CD4-positive, alpha-beta T cell (primary cell): ENCODE measurements at regions of chr10 and their contacts with region 1.

Region 1: GRCh38 chr10:43671656-43672531 is 23.2 kb upstream of the ZNF32 start:
- DNase-seq: peak in 10 of 14 experiments; percentile 16 to 81 (median 34)
- ATAC-seq: peak; percentile 68
- H3K4me3 ChIP-seq: no peak overlapping the region
- H3K4me3 Mint-ChIP-seq: no peak overlapping the region
- H3K27ac ChIP-seq: no peak overlapping the region
- H3K27ac Mint-ChIP-seq: no peak overlapping the region
- H3K4me1 ChIP-seq: peaks cover 10% of the 10 kb centered on the region
- H3K4me1 Mint-ChIP-seq: no peaks in the 10 kb centered on the region
- H3K27me3 ChIP-seq: peaks cover 21 to 42% of the 10 kb centered on the region in 2 experiments
- H3K27me3 Mint-ChIP-seq: peaks cover 55% of the 10 kb centered on the region
- CTCF ChIP-seq: peak; percentile 80

Region 2: DNA sequence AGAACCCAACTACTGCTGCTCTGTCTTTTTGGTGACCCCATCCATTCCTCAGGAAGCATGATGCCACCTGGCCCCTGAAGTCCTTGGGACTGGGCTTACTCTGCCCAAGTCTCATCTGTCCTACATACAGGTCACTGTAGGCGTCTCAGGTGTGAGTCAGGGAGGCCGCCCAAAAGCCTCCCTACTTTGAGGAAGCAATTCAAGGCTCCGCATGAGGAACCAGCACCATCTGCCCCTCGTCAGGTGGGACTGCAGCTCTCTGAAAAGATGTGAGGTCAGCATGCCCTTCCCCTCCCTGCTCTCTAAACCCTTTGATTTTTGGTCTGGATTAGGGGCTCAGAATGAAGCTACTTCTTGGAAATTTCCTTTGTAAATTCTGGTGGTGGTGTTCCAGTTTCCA is 358.2 kb after region 1 on chr10:
- CTCF ChIA-PET with region 1: no interaction called
- POLR2A ChIA-PET with region 1: no interaction called
- intact Hi-C with region 1: loop called (anchors 1 to 2 kb)
- DNase-seq: peak in 10 of 14 experiments; percentile 3 to 57 (median 12)
- ATAC-seq: peak; percentile 54
- H3K4me3 ChIP-seq: no peak overlapping the region
- H3K4me3 Mint-ChIP-seq: no peak overlapping the region
- H3K27ac ChIP-seq: no peak overlapping the region
- H3K27ac Mint-ChIP-seq: no peak overlapping the region
- H3K4me1 ChIP-seq: no peaks in the 10 kb centered on the region
- H3K4me1 Mint-ChIP-seq: no peaks in the 10 kb centered on the region
- H3K27me3 ChIP-seq: no peaks in the 10 kb centered on the region
- H3K27me3 Mint-ChIP-seq: peaks cover 29% of the 10 kb centered on the region
- CTCF ChIP-seq: no peak

Region 3: DNA sequence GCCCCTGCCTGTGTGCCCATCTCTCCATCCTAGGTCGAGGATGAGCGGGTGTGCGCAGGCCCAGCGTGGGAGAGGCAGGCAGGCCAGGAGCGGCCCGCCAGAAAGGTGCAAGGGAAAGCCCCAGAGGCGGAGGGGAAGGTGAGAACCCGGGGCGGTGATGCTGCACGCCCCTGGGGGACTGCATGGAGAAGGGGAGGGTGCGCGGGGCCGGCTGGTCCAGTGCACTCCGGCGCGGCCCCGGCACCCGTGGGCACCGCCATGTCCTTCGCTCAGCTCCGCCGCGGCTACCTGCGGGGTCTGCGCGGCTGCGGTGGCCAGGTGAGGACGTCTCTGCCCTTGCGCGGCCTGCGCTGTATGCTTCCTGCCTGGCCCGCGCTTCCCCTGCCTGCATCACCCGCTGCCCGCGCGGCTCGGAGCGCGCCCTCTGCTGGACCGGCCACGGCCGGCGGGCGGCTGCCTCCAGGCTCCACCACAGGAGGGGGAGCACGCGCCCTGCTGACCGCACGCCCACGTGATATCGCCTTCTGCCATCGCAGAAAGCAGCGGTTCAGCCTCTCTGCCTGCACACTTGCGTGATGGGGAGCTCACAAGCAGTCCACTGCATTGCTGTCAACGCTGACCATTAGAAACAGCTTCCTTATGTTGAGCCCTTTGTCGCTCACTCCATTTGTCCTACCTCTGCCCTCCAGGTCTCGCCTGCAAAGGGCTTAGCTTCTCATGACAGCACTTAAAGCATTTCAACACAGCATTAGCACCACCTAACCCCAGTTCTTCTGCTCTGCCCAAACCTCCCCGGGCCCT is 639.1 kb after region 1 on chr10:
- CTCF ChIA-PET with region 1: no interaction called
- POLR2A ChIA-PET with region 1: no interaction called
- intact Hi-C with region 1: loop called (anchors 1 to 2 kb)
- DNase-seq: peak; percentile 15 to 80 (median 50)
- ATAC-seq: peak; percentile 73
- H3K4me3 ChIP-seq: peak overlapping the region; percentile 22
- H3K4me3 Mint-ChIP-seq: no peak overlapping the region
- H3K27ac ChIP-seq: no peak overlapping the region
- H3K27ac Mint-ChIP-seq: no peak overlapping the region
- H3K4me1 ChIP-seq: peaks cover 14% of the 10 kb centered on the region
- H3K4me1 Mint-ChIP-seq: peaks cover 6% of the 10 kb centered on the region
- H3K27me3 ChIP-seq: no peaks in the 10 kb centered on the region
- H3K27me3 Mint-ChIP-seq: peaks cover 18% of the 10 kb centered on the region
- CTCF ChIP-seq: peak; percentile 49

Region 4: DNA sequence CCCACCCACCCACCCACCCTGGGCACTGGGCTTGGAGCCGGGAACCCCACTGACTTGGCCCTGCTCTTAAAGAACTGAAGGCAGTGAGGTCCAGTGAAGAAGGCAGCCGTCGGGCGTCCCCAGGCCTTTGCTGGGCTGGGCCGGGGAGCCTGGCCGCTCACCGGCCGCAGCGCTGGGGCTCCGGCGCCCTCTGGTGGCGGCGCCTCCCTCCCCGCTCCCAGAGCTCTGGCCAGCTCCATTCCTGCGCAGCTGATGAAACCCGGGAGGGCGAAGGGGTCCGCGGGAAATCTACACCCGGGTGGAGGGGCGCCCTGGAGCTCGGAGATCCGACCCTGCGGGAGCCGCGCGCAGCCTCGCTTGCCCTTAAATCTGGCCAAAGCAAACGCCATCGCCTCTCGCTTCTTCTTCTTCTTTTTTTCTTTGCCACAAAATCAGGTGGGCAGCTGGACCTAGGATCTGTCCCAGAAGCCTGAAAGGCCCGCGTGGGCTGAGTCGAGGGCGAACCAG is 714.7 kb after region 1 on chr10:
- CTCF ChIA-PET with region 1: interaction called, 5 read pairs
- POLR2A ChIA-PET with region 1: no interaction called
- intact Hi-C with region 1: loop called in 1 of 2 experiments (anchors 1 kb)
- DNase-seq: peak in 7 of 14 experiments; percentile 4 to 58 (median 18)
- ATAC-seq: no peak
- H3K4me3 ChIP-seq: no peak overlapping the region
- H3K4me3 Mint-ChIP-seq: no peak overlapping the region
- H3K27ac ChIP-seq: no peak overlapping the region
- H3K27ac Mint-ChIP-seq: no peak overlapping the region
- H3K4me1 ChIP-seq: peaks cover 3% of the 10 kb centered on the region
- H3K4me1 Mint-ChIP-seq: peaks cover 4% of the 10 kb centered on the region
- H3K27me3 ChIP-seq: peaks cover 27 to 53% of the 10 kb centered on the region in 2 experiments
- H3K27me3 Mint-ChIP-seq: peaks cover 54% of the 10 kb centered on the region
- CTCF ChIP-seq: peak; percentile 42

Region 5: DNA sequence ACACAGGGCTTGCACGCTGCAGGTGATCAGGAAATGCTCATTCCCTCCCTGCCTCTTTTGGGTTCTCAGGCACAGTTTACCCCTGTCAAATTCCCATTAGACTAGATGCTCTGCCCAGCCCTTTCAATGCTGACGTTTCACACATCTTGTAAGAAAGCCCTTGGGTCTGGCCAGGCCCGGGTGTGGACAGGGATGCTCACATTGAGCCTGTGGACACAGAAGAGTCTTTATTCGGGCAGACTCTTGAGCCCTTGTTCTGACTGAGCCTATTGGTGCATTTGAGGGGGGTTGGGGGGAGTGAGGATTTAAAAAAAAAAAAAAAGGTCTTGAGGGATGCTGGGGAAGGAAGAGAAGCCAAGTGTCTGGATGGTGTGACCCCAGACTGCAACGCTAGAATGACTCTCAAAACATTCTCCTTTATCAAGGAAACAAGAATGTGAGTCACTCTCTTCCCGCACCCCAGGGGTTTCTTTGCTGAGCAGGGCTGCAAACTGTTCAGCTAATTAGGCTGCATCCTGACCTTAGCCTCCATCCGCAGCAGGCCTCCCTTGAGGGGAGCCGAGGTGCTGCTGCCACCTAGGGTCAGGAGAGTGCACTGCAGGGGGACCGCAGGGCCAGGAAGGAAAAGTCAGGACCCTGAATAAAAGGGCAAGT is 1185.6 kb after region 1 on chr10:
- CTCF ChIA-PET with region 1: no interaction called
- POLR2A ChIA-PET with region 1: no interaction called
- intact Hi-C with region 1: loop called in 1 of 2 experiments (anchors 2 kb)
- DNase-seq: peak; percentile 20 to 69 (median 43)
- ATAC-seq: peak; percentile 84
- H3K4me3 ChIP-seq: no peak overlapping the region
- H3K4me3 Mint-ChIP-seq: no peak overlapping the region
- H3K27ac ChIP-seq: no peak overlapping the region
- H3K27ac Mint-ChIP-seq: no peak overlapping the region
- H3K4me1 ChIP-seq: no peaks in the 10 kb centered on the region
- H3K4me1 Mint-ChIP-seq: no peaks in the 10 kb centered on the region
- H3K27me3 ChIP-seq: peaks cover 0 to 5% of the 10 kb centered on the region in 2 experiments
- H3K27me3 Mint-ChIP-seq: peaks cover 3% of the 10 kb centered on the region
- CTCF ChIP-seq: peak; percentile 98

Region 6: GRCh38 chr10:44864637-44865288 is 1192.9 kb after region 1 on chr10:
- CTCF ChIA-PET with region 1: no interaction called
- POLR2A ChIA-PET with region 1: no interaction called
- intact Hi-C with region 1: loop called (anchors 1 to 2 kb)
- DNase-seq: peak; percentile 60 to 90 (median 80)
- ATAC-seq: peak; percentile 73
- H3K4me3 ChIP-seq: peak overlapping the region; percentile 55
- H3K4me3 Mint-ChIP-seq: peak overlapping the region; percentile 87
- H3K27ac ChIP-seq: no peak overlapping the region
- H3K27ac Mint-ChIP-seq: no peak overlapping the region
- H3K4me1 ChIP-seq: peaks cover 17% of the 10 kb centered on the region
- H3K4me1 Mint-ChIP-seq: peaks cover 21% of the 10 kb centered on the region
- H3K27me3 ChIP-seq: peaks cover 22 to 30% of the 10 kb centered on the region in 2 experiments
- H3K27me3 Mint-ChIP-seq: peaks cover 70% of the 10 kb centered on the region
- CTCF ChIP-seq: peak; percentile 90

Region 7: DNA sequence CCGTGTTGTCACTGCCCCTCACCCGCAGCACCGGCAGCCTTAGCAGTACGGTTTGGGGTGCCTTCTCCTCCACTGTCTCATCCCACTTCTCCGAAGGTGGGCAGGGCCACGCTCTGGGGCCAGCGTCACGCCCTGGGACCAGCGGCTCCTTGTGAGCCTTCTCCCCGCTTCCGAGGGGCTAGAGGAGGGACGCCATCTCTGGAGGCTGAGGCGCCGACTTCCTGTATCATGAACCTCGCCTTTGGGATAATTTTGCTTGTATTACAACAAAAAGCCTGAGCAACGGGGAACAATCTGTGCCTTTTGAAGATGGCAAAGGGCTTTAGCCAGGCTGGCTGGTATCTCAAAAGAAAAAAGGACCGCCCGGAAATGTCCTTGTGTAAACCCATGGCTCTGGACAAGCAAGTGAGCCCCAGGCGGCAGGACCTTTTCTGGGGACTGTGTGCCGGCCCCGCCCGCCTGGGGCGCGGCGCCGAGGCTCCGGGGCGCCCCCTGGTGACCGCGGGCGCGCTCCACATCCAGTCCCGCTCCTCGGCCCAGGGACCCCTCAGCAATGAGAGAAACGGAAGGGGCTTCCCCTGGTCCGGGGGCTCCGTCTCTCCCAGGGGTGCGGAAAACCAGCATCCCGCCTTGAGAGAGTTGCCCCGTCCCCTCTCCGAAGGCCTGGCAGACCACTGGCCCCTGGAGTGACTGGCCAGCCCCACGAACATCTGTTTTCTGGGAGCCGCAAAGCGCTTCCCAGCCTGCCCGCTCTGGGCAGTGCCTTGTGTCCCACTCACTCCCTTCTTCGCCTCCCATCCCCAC is 1302.9 kb after region 1 on chr10:
- CTCF ChIA-PET with region 1: no interaction called
- POLR2A ChIA-PET with region 1: no interaction called
- intact Hi-C with region 1: loop called in 1 of 2 experiments (anchors 5 kb)
- DNase-seq: peak in 13 of 14 experiments; percentile 30 to 83 (median 60)
- ATAC-seq: peak; percentile 94
- H3K4me3 ChIP-seq: peak overlapping the region; percentile 55
- H3K4me3 Mint-ChIP-seq: peak overlapping the region; percentile 44
- H3K27ac ChIP-seq: no peak overlapping the region
- H3K27ac Mint-ChIP-seq: no peak overlapping the region
- H3K4me1 ChIP-seq: peaks cover 33% of the 10 kb centered on the region
- H3K4me1 Mint-ChIP-seq: peaks cover 4% of the 10 kb centered on the region
- H3K27me3 ChIP-seq: no peaks in the 10 kb centered on the region
- H3K27me3 Mint-ChIP-seq: no peaks in the 10 kb centered on the region
- CTCF ChIP-seq: peak; percentile 89